B cell (primary cell): ENCODE measurements at regions of chr15 and their contacts with region 1.

Region 1: GRCh38 chr15:50354838-50355618 is at the start of gene GABPB1:
- DNase-seq: peak; percentile 99
- ATAC-seq: peak; percentile 58
- H3K4me3 ChIP-seq: peak within 1 kb of the TSS; percentile 71 to 91 (median 82)
- H3K4me3 Mint-ChIP-seq: peak within 1 kb of the TSS; percentile 95
- H3K27ac ChIP-seq: peak within 1 kb of the TSS; percentile 98 to 99
- H3K27ac Mint-ChIP-seq: peak within 1 kb of the TSS; percentile 98
- H3K4me1 ChIP-seq: peaks cover 44 to 52% of the 10 kb centered on the region in 2 donors
- H3K4me1 Mint-ChIP-seq: peaks cover 60% of the 10 kb centered on the region
- H3K27me3 ChIP-seq: no peaks in the 10 kb centered on the region
- H3K27me3 Mint-ChIP-seq: no peaks in the 10 kb centered on the region
- CTCF ChIP-seq: no peak
- total RNA-seq, gene GABPB1: 37.1 and 37.3 TPM in 2 replicates

Region 2: DNA sequence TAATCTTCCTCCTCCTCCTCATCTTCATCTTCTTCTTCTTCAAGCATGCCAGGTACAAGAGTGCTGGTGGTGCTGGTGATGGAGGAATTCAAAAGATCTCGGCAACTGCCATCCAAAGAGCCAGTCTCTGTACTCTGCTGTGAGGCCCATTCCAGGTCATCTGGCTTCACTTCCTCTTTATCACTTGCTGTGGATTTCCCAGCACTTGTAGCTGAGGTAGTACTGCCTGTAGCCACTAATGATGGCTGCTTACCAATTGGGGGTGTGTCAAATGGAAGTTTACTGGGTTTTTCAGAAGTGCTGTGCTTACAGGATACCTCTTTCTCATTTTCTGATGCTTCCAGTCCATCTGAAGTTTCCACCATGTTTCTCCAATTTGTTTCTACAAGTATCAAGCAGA is 1362.5 kb before region 1 on chr15:
- CTCF ChIA-PET with region 1: no interaction called
- POLR2A ChIA-PET with region 1: interaction called, 10 read pairs
- intact Hi-C with region 1: no loop called
- DNase-seq: peak; percentile 42
- ATAC-seq: peak; percentile 51
- H3K4me3 ChIP-seq: no peak overlapping the region
- H3K4me3 Mint-ChIP-seq: no peak overlapping the region
- H3K27ac ChIP-seq: no peak overlapping the region
- H3K27ac Mint-ChIP-seq: no peak overlapping the region
- H3K4me1 ChIP-seq: no peaks in the 10 kb centered on the region
- H3K4me1 Mint-ChIP-seq: peaks cover 4% of the 10 kb centered on the region
- H3K27me3 ChIP-seq: no peaks in the 10 kb centered on the region
- H3K27me3 Mint-ChIP-seq: no peaks in the 10 kb centered on the region
- CTCF ChIP-seq: no peak

Region 3: GRCh38 chr15:49155110-49155833 is 1199.8 kb before region 1 on chr15 and contains the start of gene COPS2:
- CTCF ChIA-PET with region 1: no interaction called
- POLR2A ChIA-PET with region 1: no interaction called
- intact Hi-C with region 1: loop called (anchors 5 kb)
- DNase-seq: peak; percentile 97
- ATAC-seq: peak; percentile 93
- H3K4me3 ChIP-seq: peak within 1 kb of the TSS; percentile 80 to 99 (median 90)
- H3K4me3 Mint-ChIP-seq: peak within 1 kb of the TSS; percentile 98
- H3K27ac ChIP-seq: peak within 1 kb of the TSS; percentile 92 to 94
- H3K27ac Mint-ChIP-seq: peak within 1 kb of the TSS; percentile 96
- H3K4me1 ChIP-seq: peaks cover 11 to 25% of the 10 kb centered on the region in 2 donors
- H3K4me1 Mint-ChIP-seq: peaks cover 41% of the 10 kb centered on the region
- H3K27me3 ChIP-seq: no peaks in the 10 kb centered on the region
- H3K27me3 Mint-ChIP-seq: no peaks in the 10 kb centered on the region
- CTCF ChIP-seq: peak; percentile 9
- total RNA-seq, gene COPS2: 44.5 and 47.8 TPM in 2 replicates

Region 4: GRCh38 chr15:50315814-50316630 is 39.0 kb before region 1 on chr15:
- CTCF ChIA-PET with region 1: interaction called, 3 read pairs
- POLR2A ChIA-PET with region 1: no interaction called
- intact Hi-C with region 1: loop called (anchors 2 kb)
- DNase-seq: peak; percentile 57
- ATAC-seq: no peak
- H3K4me3 ChIP-seq: no peak overlapping the region
- H3K4me3 Mint-ChIP-seq: no peak overlapping the region
- H3K27ac ChIP-seq: no peak overlapping the region
- H3K27ac Mint-ChIP-seq: no peak overlapping the region
- H3K4me1 ChIP-seq: no peaks in the 10 kb centered on the region
- H3K4me1 Mint-ChIP-seq: peaks cover 12% of the 10 kb centered on the region
- H3K27me3 ChIP-seq: no peaks in the 10 kb centered on the region
- H3K27me3 Mint-ChIP-seq: no peaks in the 10 kb centered on the region
- CTCF ChIP-seq: peak; percentile 95

Region 5: DNA sequence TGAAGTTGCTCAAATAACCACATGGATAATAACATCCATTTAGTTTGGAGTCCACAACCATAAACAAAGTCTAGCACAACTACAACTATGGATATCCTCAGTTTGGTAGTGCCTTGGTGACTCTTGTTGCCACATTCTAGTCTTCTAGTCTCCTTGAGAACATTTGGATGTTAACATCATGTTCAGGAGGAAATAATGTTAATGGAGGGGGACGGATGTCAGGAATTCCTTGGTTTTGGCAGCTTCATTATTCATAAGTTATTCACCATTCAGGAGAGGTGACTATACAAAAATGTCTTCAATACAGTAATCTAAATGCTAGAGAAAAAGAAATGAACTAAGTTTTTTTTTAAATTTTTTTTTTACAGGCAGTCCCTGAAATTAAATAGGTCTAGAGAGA is 26.4 kb after region 1 on chr15:
- CTCF ChIA-PET with region 1: no interaction called
- POLR2A ChIA-PET with region 1: no interaction called
- intact Hi-C with region 1: no loop called
- DNase-seq: no peak
- ATAC-seq: no peak
- H3K4me3 ChIP-seq: no peak overlapping the region
- H3K4me3 Mint-ChIP-seq: no peak overlapping the region
- H3K27ac ChIP-seq: no peak overlapping the region
- H3K27ac Mint-ChIP-seq: no peak overlapping the region
- H3K4me1 ChIP-seq: peaks cover 0 to 4% of the 10 kb centered on the region in 2 donors
- H3K4me1 Mint-ChIP-seq: peaks cover 13% of the 10 kb centered on the region
- H3K27me3 ChIP-seq: no peaks in the 10 kb centered on the region
- H3K27me3 Mint-ChIP-seq: no peaks in the 10 kb centered on the region
- CTCF ChIP-seq: no peak

Region 6: DNA sequence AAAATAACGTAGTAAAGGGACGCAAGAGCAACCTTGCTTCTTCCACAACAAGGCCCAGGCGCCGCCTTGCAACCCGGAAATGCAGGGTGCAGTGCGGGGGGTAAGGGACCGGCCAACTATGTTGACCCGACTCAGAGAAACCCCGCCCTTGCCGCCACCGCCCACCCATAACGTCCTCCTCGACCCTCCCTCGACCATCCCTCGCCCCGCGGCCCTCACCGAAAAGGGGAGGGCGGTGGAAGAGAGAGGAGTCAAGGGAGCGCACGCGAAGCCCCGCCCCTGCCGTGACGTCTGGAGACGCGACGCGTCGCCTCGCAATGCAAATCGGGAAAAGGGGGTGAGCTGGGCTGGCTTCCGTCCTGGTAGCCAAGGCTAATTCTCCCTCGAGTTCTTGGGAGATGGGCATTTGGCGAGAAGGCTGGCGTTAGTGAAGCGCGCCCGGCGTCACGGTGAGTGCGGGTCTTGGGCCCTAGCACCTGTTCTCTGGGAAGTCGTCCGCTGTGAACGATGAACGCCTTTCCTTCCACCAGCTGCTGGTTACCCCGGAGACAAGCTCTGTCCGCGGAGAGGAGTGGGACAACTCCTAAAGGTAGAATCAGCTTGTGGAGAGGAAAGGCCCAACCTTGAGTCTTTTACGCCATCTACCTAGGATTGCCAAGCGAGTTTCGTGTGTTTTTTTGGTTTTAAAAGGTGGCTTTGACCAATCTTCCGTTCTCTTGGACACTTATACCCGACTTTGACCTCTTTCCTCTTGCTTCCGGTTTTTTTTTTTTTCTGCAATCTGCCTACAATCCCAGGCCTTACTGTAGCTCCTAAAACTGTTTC is 69.2 kb after region 1 on chr15 and contains the start of gene USP8:
- CTCF ChIA-PET with region 1: interaction called, 5 read pairs
- POLR2A ChIA-PET with region 1: interaction called, 18 read pairs
- intact Hi-C with region 1: loop called (anchors 1 kb)
- DNase-seq: peak; percentile 97
- ATAC-seq: peak; percentile 97
- H3K4me3 ChIP-seq: peak within 1 kb of the TSS; percentile 78 to 100 (median 83)
- H3K4me3 Mint-ChIP-seq: peak within 1 kb of the TSS; percentile 98
- H3K27ac ChIP-seq: peak within 1 kb of the TSS; percentile 95 to 98
- H3K27ac Mint-ChIP-seq: peak within 1 kb of the TSS; percentile 96
- H3K4me1 ChIP-seq: peaks cover 19 to 22% of the 10 kb centered on the region in 2 donors
- H3K4me1 Mint-ChIP-seq: peaks cover 37% of the 10 kb centered on the region
- H3K27me3 ChIP-seq: no peaks in the 10 kb centered on the region
- H3K27me3 Mint-ChIP-seq: no peaks in the 10 kb centered on the region
- CTCF ChIP-seq: no peak
- total RNA-seq, gene USP8: 126 TPM in 2 replicates

Region 7: DNA sequence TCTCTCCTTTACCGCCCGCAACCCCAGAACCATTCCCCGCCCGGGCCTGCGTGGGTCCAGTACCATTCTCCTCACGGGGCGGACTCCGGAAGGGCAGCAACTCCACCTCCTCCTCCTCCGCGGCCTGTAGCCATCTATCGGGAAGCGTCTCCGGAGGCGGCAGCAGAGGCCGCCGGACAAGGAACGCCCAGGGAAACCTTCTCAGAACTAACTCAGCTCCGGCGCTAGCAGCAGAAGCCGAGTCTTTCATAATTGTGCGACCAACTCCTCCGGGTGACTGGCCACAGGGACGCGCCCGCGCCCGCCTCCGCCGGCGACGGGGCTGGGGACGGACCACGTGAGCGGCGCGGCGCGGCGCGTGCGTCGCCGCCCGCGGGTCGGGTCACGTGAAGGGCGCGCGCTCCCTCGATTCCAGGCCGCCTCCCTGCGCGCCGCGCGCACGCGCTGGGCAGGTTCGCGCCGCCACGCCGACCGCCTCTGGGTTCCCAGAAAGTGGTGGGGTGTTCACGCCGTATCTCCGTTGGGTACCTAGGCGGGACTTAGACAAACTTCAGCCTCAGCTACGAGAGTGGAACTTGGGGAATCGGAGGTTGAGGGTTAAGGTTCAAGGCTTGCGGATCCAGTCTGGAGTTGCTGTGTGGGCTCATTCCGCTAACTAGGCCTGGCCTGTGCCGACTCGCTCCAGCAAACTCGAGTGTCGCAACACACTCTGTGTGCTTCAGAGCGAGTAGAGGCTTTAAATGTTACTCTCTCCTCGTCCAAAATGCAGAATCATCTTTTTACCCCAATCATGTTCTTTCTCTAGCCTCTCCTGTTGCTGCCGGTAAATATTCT is 331.7 kb after region 1 on chr15 and contains the start of gene TRPM7:
- CTCF ChIA-PET with region 1: no interaction called
- POLR2A ChIA-PET with region 1: no interaction called
- intact Hi-C with region 1: loop called (anchors 2 kb)
- DNase-seq: peak; percentile 97
- ATAC-seq: peak; percentile 81
- H3K4me3 ChIP-seq: peak within 1 kb of the TSS; percentile 74 to 100 (median 96)
- H3K4me3 Mint-ChIP-seq: peak within 1 kb of the TSS; percentile 100
- H3K27ac ChIP-seq: peak within 1 kb of the TSS; percentile 98 to 100
- H3K27ac Mint-ChIP-seq: peak within 1 kb of the TSS; percentile 99
- H3K4me1 ChIP-seq: peaks cover 19 to 24% of the 10 kb centered on the region in 2 donors
- H3K4me1 Mint-ChIP-seq: peaks cover 46% of the 10 kb centered on the region
- H3K27me3 ChIP-seq: no peaks in the 10 kb centered on the region
- H3K27me3 Mint-ChIP-seq: no peaks in the 10 kb centered on the region
- CTCF ChIP-seq: no peak
- total RNA-seq, gene TRPM7: 77.2 and 86.4 TPM in 2 replicates

Region 8: DNA sequence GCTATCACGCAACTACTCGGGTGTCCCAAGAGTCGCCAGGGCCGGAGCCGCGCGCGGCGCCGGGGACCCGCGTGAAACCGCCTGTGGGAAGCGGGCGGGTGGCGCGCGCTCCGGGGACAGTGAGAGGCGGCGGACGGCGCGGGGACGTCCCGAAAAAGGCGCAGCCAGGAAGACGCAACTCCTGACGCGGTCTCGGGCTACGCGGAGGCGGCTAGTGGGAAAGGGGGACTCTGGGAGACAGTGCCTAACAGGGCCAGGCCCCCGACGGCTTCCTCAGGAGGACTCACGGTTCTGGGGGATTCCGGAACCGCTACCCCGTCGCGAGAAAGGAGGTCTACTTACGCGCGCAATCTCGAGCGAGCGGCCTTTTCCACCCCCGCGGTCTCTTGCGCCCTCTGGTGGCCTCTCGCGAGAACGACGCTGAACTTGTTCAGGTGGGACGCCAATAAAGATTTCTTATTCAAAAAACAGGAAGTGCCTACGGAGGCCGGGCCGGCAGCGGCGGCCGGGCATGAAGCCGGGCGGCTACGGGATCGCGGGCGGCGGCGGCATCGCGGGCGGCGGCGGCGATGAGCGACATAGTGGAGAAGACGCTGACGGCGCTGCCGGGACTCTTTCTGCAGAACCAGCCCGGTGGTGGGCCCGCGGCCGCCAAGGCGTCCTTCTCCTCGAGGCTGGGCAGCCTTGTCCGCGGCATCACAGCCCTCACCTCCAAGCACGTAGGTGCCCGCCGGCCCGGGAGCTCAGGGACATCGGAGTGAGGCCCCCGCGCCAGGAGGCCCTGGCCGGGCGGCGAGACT is 553.4 kb after region 1 on chr15 and contains the start of gene AP4E1:
- CTCF ChIA-PET with region 1: interaction called, 3 read pairs
- POLR2A ChIA-PET with region 1: interaction called, 4 read pairs
- intact Hi-C with region 1: loop called (anchors 1 kb)
- DNase-seq: peak; percentile 98
- ATAC-seq: peak; percentile 66
- H3K4me3 ChIP-seq: peak within 1 kb of the TSS; percentile 79 to 99 (median 96)
- H3K4me3 Mint-ChIP-seq: peak within 1 kb of the TSS; percentile 95
- H3K27ac ChIP-seq: peak within 1 kb of the TSS; percentile 92 to 100
- H3K27ac Mint-ChIP-seq: peak within 1 kb of the TSS; percentile 99
- H3K4me1 ChIP-seq: peaks cover 12 to 33% of the 10 kb centered on the region in 2 donors
- H3K4me1 Mint-ChIP-seq: peaks cover 31% of the 10 kb centered on the region
- H3K27me3 ChIP-seq: no peaks in the 10 kb centered on the region
- H3K27me3 Mint-ChIP-seq: no peaks in the 10 kb centered on the region
- CTCF ChIP-seq: peak; percentile 89
- total RNA-seq, gene AP4E1: 12.0 and 12.6 TPM in 2 replicates

Region 9: DNA sequence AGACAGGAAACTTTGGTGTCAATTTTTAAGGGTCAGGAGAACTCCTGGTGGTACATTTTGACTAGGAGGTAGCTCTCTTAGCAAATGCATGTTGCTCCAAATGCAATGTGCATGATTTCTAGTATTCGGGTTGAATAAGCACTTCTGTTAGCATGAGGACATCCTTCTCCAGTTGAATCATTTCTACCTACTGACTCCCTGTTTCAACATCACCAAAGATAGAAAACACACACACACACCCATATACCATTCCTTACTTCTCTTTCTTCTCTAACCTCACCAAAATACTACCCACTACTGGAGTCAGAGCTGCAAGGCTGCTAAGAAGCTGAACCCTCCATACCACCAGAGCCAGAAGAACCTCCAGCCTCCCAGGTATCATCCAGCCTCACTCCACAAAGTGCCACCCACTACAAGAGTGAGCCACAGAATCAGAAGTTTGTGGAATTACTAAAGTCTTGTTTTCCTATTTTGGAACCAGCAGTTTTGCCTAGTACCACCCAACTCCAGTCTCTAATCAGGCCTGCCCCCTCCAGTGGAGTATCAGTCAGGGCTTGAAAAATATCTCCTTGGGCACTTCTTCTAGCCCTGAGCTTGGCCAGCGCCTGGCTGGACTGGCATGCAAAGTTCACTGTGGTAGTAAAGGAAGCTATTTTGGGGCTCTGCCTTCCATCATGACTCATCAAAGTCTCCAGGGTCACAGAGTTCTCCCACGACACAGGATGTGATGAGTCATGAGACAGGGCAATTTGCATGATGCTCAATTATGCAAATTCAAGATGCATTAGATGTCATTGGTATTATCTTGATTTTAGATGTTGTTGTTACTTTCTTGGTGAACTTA is 873.1 kb after region 1 on chr15:
- CTCF ChIA-PET with region 1: no interaction called
- POLR2A ChIA-PET with region 1: no interaction called
- intact Hi-C with region 1: no loop called
- DNase-seq: no peak
- ATAC-seq: no peak
- H3K4me3 ChIP-seq: no peak overlapping the region
- H3K4me3 Mint-ChIP-seq: no peak overlapping the region
- H3K27ac ChIP-seq: no peak overlapping the region
- H3K27ac Mint-ChIP-seq: no peak overlapping the region
- H3K4me1 ChIP-seq: no peaks in the 10 kb centered on the region
- H3K4me1 Mint-ChIP-seq: peaks cover 2% of the 10 kb centered on the region
- H3K27me3 ChIP-seq: peaks cover 0 to 3% (median 0%) of the 10 kb centered on the region in 4 experiments
- H3K27me3 Mint-ChIP-seq: peaks cover 18% of the 10 kb centered on the region
- CTCF ChIP-seq: no peak